Thyroid gland (tissue), 4 donors: ENCODE measurements at regions of chr12 and their contacts with region 1.

Region 1: DNA sequence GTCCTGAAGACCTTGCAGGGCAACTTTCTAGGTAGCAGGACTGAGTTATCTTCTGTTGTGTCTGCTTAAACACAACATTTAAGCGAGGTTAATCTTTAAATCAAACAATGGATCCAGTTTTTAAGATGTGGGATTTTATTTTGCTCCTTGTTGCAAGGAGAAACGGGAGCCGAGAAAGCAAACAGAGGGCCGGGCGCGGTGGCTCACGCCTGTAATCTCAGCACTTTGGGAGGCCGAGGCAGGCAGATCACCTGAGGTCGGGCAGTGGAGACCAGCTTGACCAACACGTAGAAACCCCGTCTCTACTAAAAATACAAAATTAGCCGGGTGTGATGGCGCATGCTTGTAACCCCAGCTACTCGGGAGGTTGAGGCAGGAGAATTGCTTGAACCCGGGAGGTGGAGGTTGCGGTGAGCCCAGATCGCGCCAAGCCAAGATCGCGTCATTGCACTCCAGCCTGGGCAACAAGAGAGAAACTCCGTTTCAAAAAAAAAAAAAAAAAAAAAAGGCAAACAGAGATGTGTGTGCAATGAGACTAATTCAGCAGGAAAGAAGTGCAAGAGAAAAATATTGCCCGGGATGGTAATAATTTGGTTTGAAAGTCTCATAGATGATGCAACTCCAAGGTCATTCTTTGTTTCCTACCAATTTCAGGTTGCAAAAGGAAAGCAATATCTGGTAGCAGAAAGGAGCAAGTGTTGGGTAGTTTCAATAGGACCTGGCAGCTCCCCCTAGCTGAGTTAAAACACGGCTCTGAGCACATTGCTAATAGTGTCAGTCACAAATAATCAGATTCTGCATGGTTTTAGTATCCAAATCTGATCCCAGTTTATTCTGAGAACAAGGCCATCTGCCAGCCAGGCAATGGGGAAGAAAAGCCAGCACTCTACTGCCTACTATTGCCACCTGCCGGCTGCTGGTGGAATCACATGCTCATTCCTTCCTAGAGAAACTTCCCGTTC is 141.4 kb downstream of the PPM1H start:
- DNase-seq: peak; percentile 89 to 92
- H3K4me3 ChIP-seq: no peak overlapping the region
- H3K27ac ChIP-seq: peak overlapping the region; percentile 34 to 47 (median 43)
- H3K4me1 ChIP-seq: peaks cover 13 to 28% of the 10 kb centered on the region in 2 donors
- H3K27me3 ChIP-seq: no peaks in the 10 kb centered on the region
- CTCF ChIP-seq: peak; percentile 78 to 98 (median 95)
- POLR2A ChIP-seq: no peak

Region 2: DNA sequence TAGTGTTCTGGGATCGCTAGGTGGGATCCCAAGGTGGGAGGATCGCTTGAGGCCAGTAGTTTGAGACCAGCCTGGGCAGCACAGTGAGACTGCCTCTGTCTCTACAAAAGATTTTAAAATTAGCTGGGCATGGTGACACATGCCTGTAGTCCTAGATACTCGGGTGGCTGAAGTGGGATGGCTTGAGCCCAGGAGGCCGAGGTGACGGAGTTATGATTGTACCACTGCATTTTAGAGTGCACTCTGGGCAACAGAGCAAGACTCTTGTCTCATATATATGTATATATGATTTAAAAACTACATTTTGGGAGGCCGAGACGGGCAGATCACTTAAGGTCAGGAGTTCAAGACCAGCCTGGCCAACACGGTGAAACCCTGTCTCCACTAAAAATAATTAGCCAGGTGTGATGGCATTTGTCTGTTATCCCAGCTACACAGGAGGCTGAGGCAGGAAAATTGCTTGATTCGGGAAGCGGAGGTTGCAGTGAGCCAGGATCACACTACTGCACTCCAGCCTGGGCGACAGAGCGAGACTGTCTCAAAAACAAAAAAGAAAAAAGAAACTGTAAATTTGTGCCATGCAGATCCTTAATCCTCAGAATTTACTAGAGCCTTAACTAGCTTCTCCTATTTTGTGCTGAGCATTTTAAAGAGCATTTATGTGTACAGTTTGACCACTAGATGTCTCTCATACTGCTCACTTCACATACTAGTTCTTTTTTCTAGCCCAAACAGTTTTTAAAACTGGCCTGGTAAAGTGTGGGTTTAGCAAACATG is 212.1 kb before region 1 on chr12:
- intact Hi-C with region 1: loop called (anchors 5 kb)
- DNase-seq: peak; percentile 61 to 75
- H3K4me3 ChIP-seq: no peak overlapping the region
- H3K27ac ChIP-seq: peak overlapping the region; percentile 34 to 77 (median 48)
- H3K4me1 ChIP-seq: peaks cover 6% of the 10 kb centered on the region in 2 donors
- H3K27me3 ChIP-seq: no peaks in the 10 kb centered on the region
- CTCF ChIP-seq: peak; percentile 29 to 90 (median 70)
- POLR2A ChIP-seq: no peak

Region 3: DNA sequence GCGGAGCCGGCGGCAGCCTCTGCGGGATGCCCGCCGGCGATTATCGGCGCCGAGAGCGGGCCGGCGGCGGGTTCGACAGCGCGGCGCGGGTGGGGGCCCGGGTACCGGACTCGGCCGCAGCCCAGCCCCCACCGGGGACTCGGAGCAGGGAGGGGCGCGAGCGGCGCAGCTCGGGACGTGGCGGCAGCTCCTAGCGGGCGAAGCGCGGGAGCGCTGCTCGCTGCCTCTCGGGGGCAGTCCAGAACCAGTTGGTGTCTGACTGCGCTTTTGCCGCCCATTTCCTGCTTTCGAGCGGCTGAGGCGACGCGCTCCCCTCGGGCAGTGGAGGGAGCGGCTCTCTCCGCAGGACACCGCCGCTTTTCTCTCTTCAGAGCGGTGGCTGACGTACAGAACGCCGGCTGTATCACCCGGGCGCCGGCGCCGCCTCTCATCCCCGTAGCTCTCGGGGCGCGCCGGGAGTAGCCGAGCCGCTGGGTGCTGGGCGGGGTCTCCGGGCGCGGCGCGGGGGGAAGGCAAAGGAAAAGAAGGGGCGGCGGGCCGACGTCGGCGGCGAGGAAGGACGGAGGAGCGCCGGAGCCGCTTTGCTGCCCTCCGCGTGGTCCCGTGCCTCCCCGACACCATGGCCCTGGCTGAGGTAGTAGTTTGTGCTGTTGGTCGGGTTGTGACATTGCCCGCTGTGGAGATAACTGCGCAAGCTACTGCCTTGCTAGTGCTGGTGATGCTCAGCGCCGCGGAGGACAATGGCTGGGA is 190.3 kb before region 1 on chr12:
- intact Hi-C with region 1: loop called (anchors 5 kb)
- DNase-seq: peak; percentile 84 to 86
- H3K4me3 ChIP-seq: peak overlapping the region; percentile 30 to 91 (median 85)
- H3K27ac ChIP-seq: peak overlapping the region; percentile 99 to 100 (median 99)
- H3K4me1 ChIP-seq: peaks cover 16 to 29% of the 10 kb centered on the region in 2 donors
- H3K27me3 ChIP-seq: no peaks in the 10 kb centered on the region
- CTCF ChIP-seq: peak; percentile 18 to 76 (median 50)
- POLR2A ChIP-seq: peak; percentile 41 to 89